ENCODE measurements at regions of chr15 and their contacts with region 1.

Region 1: GRCh38 chr15:34367101-34368081 is at the start of gene LPCAT4:
- DNase-seq: peak; percentile 79 to 96 (median 90)
- ATAC-seq: peak; percentile 84
- H3K4me3 ChIP-seq: peak within 1 kb of the TSS; percentile 86 to 91
- H3K4me3 Mint-ChIP-seq: peak within 1 kb of the TSS; percentile 98
- H3K27ac ChIP-seq: peak within 1 kb of the TSS; percentile 75 to 89
- H3K27ac Mint-ChIP-seq: peak within 1 kb of the TSS; percentile 96
- H3K4me1 ChIP-seq: peaks cover 21% of the 10 kb centered on the region
- H3K4me1 Mint-ChIP-seq: peaks cover 29% of the 10 kb centered on the region
- H3K27me3 ChIP-seq: no peaks in the 10 kb centered on the region
- H3K27me3 Mint-ChIP-seq: no peaks in the 10 kb centered on the region
- CTCF ChIP-seq: peak; percentile 92
- total RNA-seq, gene LPCAT4: 30.9 to 36.3 TPM

Region 2: GRCh38 chr15:33262306-33262705 is 1105.1 kb before region 1 on chr15:
- CTCF ChIA-PET with region 1: no interaction called
- POLR2A ChIA-PET with region 1: no interaction called
- intact Hi-C with region 1: no loop called
- DNase-seq: no peak
- ATAC-seq: no peak
- H3K4me3 ChIP-seq: no peak overlapping the region
- H3K4me3 Mint-ChIP-seq: no peak overlapping the region
- H3K27ac ChIP-seq: no peak overlapping the region
- H3K27ac Mint-ChIP-seq: no peak overlapping the region
- H3K4me1 ChIP-seq: no peaks in the 10 kb centered on the region
- H3K4me1 Mint-ChIP-seq: no peaks in the 10 kb centered on the region
- H3K27me3 ChIP-seq: no peaks in the 10 kb centered on the region
- H3K27me3 Mint-ChIP-seq: no peaks in the 10 kb centered on the region
- CTCF ChIP-seq: no peak

Region 3: DNA sequence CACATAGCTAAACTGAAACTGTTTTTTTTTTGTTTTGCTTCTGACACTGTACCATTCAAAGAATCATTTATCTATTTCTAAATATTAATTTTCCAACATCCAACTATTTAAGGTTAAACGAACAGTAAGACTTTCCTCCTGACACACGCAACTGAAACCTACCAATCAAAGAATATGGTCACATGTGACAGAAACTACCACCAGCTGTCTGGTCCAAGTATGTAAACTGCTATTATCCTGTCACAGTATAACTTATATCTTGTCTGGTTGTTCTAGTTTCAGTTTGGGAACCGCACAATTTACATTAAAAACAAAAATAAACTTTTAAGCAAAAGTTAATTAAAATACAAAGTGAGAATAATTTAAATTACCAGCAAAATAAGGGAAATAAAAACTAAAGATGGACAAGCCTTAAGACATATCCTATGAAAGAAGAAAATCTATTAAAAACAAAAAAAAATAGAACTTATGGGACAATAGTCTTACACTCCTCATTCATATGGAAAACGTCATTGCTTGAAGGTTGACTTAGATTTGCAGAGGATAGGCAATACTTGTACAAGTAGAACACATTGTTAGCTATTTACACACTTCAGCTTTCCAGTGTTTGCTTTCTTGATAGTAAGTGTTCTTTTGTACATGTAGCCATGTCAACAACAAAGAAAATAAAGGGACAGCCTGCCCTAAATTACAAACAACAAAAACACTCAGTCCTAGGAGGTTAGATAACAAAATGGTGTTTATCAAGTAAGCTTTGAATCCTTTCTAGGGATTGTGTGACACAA is 425.9 kb before region 1 on chr15:
- CTCF ChIA-PET with region 1: no interaction called
- POLR2A ChIA-PET with region 1: no interaction called
- intact Hi-C with region 1: no loop called
- DNase-seq: no peak
- ATAC-seq: no peak
- H3K4me3 ChIP-seq: no peak overlapping the region
- H3K4me3 Mint-ChIP-seq: no peak overlapping the region
- H3K27ac ChIP-seq: no peak overlapping the region
- H3K27ac Mint-ChIP-seq: no peak overlapping the region
- H3K4me1 ChIP-seq: no peaks in the 10 kb centered on the region
- H3K4me1 Mint-ChIP-seq: no peaks in the 10 kb centered on the region
- H3K27me3 ChIP-seq: no peaks in the 10 kb centered on the region
- H3K27me3 Mint-ChIP-seq: no peaks in the 10 kb centered on the region
- CTCF ChIP-seq: no peak

Region 4: DNA sequence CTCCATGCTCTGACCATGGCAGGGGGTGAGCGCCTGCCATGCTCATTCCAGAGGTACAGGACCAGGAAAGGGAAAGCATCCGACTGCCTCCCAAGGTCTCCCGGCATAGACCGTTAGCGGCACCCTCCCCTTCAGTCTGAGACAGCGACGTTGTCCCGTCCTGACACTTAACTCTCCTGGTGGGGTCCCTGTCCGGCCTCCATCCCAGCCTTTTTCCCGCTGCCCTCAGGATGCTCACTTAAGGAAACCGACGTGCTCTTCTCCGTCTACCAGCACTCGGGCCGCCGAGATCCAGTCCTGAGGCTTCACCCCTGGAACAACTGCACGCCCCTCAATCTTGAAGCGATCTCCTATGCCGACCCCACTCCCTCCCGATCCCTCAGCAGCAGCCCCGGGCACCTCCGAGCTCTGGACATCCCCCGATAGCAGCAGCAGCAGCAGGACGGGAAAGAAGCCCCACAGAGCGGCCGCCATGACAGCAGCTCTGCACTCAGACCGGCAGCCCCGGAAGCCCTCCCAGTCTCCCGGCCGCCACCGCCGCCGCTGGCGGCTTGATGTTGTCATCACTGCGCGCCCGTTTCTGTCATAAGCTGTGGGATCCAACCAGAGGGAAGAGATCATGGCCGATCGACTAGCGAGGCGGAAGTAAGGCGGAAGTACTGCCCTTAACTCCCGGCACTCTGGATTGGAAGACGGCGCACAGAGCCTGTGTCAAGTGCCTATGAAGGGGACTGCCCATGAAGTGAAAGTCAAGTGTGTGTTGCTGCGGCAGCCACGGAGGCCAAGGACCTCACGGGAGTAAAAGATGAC is 265.8 kb before region 1 on chr15 and contains the starts of genes EMC7 and PGBD4:
- CTCF ChIA-PET with region 1: interaction called, 3 read pairs
- POLR2A ChIA-PET with region 1: interaction called, 11 read pairs
- intact Hi-C with region 1: loop called (anchors 1 kb)
- DNase-seq: peak; percentile 98 to 100 (median 99)
- ATAC-seq: peak; percentile 96
- H3K4me3 ChIP-seq: peak within 1 kb of the TSS; percentile 88 to 97
- H3K4me3 Mint-ChIP-seq: peak within 1 kb of the TSS; percentile 97
- H3K27ac ChIP-seq: peak within 1 kb of the TSS; percentile 95 to 97
- H3K27ac Mint-ChIP-seq: peak within 1 kb of the TSS; percentile 96
- H3K4me1 ChIP-seq: peaks cover 29% of the 10 kb centered on the region
- H3K4me1 Mint-ChIP-seq: peaks cover 40% of the 10 kb centered on the region
- H3K27me3 ChIP-seq: no peaks in the 10 kb centered on the region
- H3K27me3 Mint-ChIP-seq: no peaks in the 10 kb centered on the region
- CTCF ChIP-seq: no peak
- total RNA-seq, gene EMC7: 61.0 to 78.9 TPM
- total RNA-seq, gene PGBD4: 1.8 to 2.4 TPM

Region 5: DNA sequence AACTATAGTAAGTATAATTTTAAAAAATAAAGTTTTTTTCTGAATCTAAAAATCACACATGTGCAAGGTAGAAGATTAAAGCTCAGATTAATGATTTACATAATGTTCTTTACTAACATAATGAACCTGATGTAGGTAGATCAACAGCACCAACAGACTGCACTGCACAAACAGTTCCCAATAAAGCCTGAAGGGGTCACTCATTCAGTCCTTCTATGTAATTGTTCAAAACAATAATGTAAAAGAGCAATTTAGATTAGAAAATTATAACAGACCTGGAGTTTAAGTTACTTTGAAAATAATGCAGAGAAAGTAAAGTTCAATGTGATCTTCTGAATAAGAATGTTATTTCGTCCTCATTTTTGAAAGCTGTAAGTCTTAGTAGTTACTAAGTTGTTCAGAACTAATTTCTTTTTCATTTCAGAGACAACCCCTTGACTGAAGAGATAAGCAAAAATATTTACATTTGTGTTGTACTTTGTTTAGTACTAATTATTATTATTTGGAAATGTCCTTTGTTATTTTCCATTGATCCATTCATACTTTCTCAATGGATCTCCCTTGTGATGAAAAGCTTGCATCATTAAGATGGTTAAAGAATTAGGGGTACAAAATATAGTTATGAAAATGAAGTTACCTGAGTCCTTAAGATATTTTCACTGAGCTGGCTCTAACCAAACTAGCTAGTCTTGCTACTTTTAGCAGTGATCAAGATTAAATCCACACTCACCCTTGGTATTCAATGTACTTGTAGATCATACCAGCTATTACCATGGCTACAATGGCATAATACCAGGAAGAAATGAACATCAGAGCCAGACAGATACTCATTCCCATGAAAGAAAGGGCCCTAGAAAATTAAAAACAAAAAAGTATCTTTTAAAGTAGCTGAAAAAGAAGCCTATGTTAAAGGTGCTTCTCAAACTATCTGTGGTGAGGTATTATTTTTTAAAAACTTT is 125.7 kb before region 1 on chr15:
- CTCF ChIA-PET with region 1: interaction called, 62 read pairs
- POLR2A ChIA-PET with region 1: interaction called, 16 read pairs
- intact Hi-C with region 1: loop called (anchors 1 kb)
- DNase-seq: peak in 5 of 9 experiments; percentile 28 to 74 (median 31)
- ATAC-seq: peak; percentile 93
- H3K4me3 ChIP-seq: no peak overlapping the region
- H3K4me3 Mint-ChIP-seq: no peak overlapping the region
- H3K27ac ChIP-seq: no peak overlapping the region
- H3K27ac Mint-ChIP-seq: no peak overlapping the region
- H3K4me1 ChIP-seq: no peaks in the 10 kb centered on the region
- H3K4me1 Mint-ChIP-seq: peaks cover 3% of the 10 kb centered on the region
- H3K27me3 ChIP-seq: no peaks in the 10 kb centered on the region
- H3K27me3 Mint-ChIP-seq: no peaks in the 10 kb centered on the region
- CTCF ChIP-seq: peak; percentile 95

Region 6: DNA sequence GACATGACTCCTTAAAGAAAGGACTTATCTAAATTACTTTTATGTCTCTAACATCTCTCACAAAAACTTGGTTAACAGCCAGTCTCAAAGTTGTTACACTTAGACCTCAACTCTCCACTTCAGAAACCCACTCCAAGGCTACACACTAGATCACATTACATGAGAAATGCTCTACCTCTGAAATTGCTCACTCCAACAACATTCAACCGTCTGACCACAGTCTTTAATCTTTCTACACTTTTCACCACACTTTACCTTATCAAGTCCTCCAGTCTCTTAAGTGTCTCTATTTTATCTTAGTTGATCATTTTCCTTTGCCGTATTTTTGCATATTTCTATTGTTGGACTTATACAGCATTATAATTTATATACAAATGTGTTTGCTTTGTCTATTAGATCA is 35.6 kb before region 1 on chr15:
- CTCF ChIA-PET with region 1: interaction called, 36 read pairs
- POLR2A ChIA-PET with region 1: interaction called, 56 read pairs
- intact Hi-C with region 1: loop called (anchors 1 to 5 kb)
- DNase-seq: peak in 2 of 9 experiments; percentile 61 to 74
- ATAC-seq: peak; percentile 64
- H3K4me3 ChIP-seq: no peak overlapping the region
- H3K4me3 Mint-ChIP-seq: peak overlapping the region; percentile 23
- H3K27ac ChIP-seq: peak overlapping the region in 1 of 2 experiments; percentile 62
- H3K27ac Mint-ChIP-seq: peak overlapping the region; percentile 80
- H3K4me1 ChIP-seq: peaks cover 86% of the 10 kb centered on the region
- H3K4me1 Mint-ChIP-seq: peaks cover 83% of the 10 kb centered on the region
- H3K27me3 ChIP-seq: no peaks in the 10 kb centered on the region
- H3K27me3 Mint-ChIP-seq: no peaks in the 10 kb centered on the region
- CTCF ChIP-seq: no peak

Region 7: DNA sequence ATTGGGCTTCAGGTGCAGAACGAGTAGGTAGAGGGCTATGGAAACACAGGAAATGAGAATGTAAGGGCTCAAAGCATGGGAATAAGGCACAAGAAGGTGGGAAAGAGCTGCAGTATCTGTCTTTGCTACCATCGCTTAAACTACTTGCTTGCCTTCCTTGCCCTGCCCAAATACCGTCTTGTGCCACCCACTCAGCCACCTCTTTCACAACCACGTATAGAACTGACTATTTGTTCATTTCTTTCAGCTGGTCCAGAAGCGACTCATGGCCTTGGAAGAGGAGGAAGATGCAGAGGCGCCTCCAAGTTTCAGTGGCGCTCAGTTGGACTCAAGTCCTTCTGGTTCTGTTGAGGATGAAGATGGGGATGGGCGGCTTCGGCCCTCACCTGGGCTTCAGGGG is 12.2 kb before region 1 on chr15:
- CTCF ChIA-PET with region 1: interaction called, 24 read pairs
- POLR2A ChIA-PET with region 1: interaction called, 3 read pairs
- intact Hi-C with region 1: no loop called
- DNase-seq: no peak
- ATAC-seq: no peak
- H3K4me3 ChIP-seq: no peak overlapping the region
- H3K4me3 Mint-ChIP-seq: no peak overlapping the region
- H3K27ac ChIP-seq: no peak overlapping the region
- H3K27ac Mint-ChIP-seq: peak overlapping the region; percentile 41
- H3K4me1 ChIP-seq: no peaks in the 10 kb centered on the region
- H3K4me1 Mint-ChIP-seq: no peaks in the 10 kb centered on the region
- H3K27me3 ChIP-seq: no peaks in the 10 kb centered on the region
- H3K27me3 Mint-ChIP-seq: no peaks in the 10 kb centered on the region
- CTCF ChIP-seq: no peak

Region 8: GRCh38 chr15:34456658-34457057 is 89.3 kb after region 1 on chr15:
- CTCF ChIA-PET with region 1: no interaction called
- POLR2A ChIA-PET with region 1: no interaction called
- intact Hi-C with region 1: no loop called
- DNase-seq: no peak
- ATAC-seq: no peak
- H3K4me3 ChIP-seq: no peak overlapping the region
- H3K4me3 Mint-ChIP-seq: no peak overlapping the region
- H3K27ac ChIP-seq: no peak overlapping the region
- H3K27ac Mint-ChIP-seq: no peak overlapping the region
- H3K4me1 ChIP-seq: no peaks in the 10 kb centered on the region
- H3K4me1 Mint-ChIP-seq: no peaks in the 10 kb centered on the region
- H3K27me3 ChIP-seq: no peaks in the 10 kb centered on the region
- H3K27me3 Mint-ChIP-seq: peaks cover 32% of the 10 kb centered on the region
- CTCF ChIP-seq: no peak

Measured in CD8-positive, alpha-beta T cell (primary cell).